HEK293 (cell line): ENCODE measurements at regions of chr1 and their contacts with region 1.

Region 1: DNA sequence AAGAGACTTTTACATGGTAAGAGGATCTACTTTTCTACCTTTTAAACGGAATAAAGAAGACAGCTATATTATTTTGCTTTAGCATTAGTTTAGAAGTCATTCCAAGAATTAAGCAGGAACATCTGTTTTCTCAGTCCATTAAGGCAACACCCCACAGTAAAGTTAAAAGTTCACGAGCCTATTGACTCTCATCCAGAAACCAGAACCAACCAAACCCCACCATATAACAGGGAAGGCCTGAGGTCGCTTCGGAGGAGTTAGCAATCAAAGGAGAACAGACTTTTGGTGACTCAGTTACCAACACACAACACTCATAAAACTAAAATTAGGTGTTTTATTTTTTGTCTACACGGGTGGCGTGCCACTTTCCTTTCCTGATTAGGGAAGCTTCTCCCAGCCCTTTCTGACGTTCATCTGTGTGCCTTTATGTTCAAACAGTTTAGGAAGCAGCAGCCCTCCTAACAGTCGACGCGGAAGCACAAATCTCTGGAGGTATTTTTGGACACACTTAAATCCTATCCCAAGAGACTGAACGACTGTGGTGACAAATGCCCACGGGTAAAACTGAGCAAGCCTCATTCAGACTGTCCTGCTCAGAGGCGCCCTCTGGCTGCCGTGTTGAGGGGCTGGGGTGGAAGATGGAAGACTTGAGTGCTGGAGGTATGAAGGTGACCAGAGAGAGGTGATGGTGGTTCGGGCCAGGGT is 8.6 kb upstream of the PLA2G2C start:
- H3K4me3 ChIP-seq: no peak overlapping the region
- H3K27ac ChIP-seq: no peak overlapping the region
- H3K4me1 ChIP-seq: no peaks in the 10 kb centered on the region
- CTCF ChIP-seq: 0 out of 2 replicates have a peak, but pooled peaks have one; percentile 40

Region 2: DNA sequence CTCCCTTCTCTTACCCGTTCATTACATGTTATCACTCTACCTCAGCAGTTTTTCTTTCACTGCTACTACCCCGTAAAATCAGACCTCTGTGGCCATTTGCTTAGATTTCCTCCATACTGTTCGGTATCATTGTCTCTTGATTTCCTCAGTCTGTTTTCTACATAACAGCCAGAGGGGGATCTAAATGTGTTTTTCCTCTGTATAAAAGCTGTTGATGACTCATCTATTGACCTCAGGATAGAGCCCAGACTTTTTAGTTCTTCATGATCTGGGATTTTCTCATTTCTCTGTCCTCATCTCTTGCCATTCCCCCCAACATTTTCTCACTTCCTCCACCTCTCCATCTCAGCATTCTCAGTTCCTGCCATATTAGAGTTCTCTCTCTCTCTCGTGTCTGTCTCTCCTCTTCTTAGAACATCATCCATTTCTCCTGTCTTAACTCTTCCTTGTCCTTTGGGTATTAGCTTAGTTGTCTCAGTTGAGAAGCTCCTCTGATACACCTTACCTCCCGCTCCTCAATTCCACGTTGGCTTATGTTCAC is 302.2 kb before region 1 on chr1:
- CTCF ChIA-PET with region 1: no interaction called
- POLR2A ChIA-PET with region 1: no interaction called
- H3K4me3 ChIP-seq: no peak overlapping the region
- H3K27ac ChIP-seq: no peak overlapping the region
- H3K4me1 ChIP-seq: 0 out of 2 replicates have a peak, but pooled peaks cover 5% of the 10 kb centered on the region
- CTCF ChIP-seq: no peak

Region 3: GRCh38 chr1:19918057-19918456 is 276.9 kb before region 1 on chr1:
- CTCF ChIA-PET with region 1: interaction called, 30 read pairs
- POLR2A ChIA-PET with region 1: no interaction called
- H3K4me3 ChIP-seq: no peak overlapping the region
- H3K27ac ChIP-seq: no peak overlapping the region
- H3K4me1 ChIP-seq: no peaks in the 10 kb centered on the region
- CTCF ChIP-seq: peak; percentile 84

Region 4: DNA sequence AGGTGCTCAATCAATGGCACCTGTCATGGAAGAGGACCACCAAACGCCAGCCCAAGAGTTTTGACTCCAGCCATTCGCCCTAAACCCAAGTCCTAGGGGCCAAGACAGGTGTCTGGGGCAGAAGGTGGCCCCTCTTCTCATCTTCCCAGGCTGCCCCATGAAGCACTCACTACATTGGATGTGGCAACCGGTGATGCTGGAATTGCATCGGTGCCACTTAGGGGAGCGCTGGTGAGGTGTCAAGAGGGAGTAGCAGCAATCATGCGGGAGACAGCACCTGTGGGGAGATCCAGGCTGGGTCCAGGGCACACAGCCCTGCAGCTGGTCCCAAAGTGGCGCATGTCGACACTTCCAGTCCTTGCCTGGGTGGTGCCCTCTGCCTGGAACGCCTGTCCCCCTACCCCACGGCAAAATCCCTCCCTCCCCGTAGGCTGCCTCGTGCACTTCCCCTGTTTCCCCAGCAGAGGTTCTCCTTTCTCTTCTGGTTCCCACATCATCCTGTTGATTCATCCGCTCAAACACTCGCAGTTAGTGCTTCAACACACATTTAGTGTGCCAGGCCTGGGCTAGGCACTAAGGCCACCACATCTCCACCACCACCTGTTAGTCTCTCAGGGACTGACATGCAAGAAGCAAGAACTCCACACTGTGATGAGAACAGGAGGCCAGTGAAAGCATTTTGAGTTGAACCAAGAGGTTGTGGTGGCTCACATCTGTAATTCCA is 94.1 kb before region 1 on chr1:
- CTCF ChIA-PET with region 1: interaction called, 11 read pairs
- POLR2A ChIA-PET with region 1: no interaction called
- H3K4me3 ChIP-seq: no peak overlapping the region
- H3K27ac ChIP-seq: no peak overlapping the region
- H3K4me1 ChIP-seq: no peaks in the 10 kb centered on the region
- CTCF ChIP-seq: peak; percentile 70

Region 5: DNA sequence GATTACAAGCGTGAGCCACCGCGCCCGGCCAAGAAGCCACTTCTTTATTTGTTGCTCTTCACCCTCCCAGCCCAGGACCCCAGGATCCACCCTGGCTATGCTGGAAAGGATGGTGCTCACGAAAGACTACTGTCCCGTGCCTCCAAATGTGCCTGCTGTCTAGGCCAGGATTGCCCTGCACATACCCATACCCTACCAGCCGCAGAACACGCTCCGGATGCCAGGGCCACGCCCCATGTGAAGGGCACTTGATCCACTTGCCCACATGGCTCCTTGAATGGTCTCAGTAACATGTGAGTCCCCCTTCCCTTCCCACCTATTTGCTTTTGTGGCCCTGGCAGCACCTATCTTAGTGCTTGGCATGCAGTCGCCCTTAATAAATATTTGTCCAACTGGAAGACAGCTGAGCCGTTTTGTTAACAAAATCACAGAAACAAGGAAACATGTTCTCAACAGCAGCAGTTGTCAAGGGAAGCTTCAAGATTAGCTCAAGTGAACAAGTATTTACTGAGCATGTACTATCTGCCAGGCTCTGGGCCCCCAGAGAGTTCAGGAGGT is 22.8 kb before region 1 on chr1:
- CTCF ChIA-PET with region 1: interaction called, 13 read pairs
- POLR2A ChIA-PET with region 1: no interaction called
- H3K4me3 ChIP-seq: no peak overlapping the region
- H3K27ac ChIP-seq: no peak overlapping the region
- H3K4me1 ChIP-seq: no peaks in the 10 kb centered on the region
- CTCF ChIP-seq: no peak

Region 6: DNA sequence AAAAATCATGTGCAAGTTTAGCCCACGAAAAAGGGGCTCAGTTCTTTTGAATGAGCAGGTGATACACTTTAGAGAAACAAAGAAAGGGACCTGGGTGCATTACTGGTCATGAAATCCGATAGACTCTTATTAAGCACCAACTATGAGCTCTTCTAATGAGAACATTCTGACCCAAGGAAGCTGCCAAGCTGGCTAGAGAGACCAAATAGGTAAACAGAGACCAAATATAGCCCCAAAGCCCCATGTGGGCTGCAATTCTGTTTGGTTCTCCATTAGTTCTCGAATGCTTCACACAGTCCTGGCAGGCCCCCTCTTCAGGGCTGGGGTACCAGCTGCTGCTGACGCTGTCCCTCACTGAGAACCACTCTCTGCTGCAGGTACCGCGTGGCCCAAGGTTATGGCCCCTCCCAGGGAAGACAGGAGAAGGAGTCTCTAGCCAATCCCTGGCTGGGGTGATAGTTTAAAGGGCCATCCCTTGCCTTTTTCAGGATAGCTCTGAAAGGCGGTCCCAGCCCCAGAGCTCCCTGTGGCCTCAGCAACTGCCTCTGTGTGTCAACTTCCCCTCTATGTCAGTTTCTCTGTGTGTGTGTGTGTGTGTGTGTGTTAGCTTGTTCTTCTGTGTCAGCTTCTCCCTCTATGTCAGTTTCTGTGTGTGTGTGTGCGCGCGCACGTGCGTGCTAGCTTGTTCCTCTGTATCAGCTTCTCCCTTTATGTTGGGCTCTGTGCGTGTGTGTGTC is 16.1 kb before region 1 on chr1:
- CTCF ChIA-PET with region 1: interaction called, 37 read pairs
- POLR2A ChIA-PET with region 1: no interaction called
- H3K4me3 ChIP-seq: no peak overlapping the region
- H3K27ac ChIP-seq: no peak overlapping the region
- H3K4me1 ChIP-seq: no peaks in the 10 kb centered on the region
- CTCF ChIP-seq: no peak

Region 7: GRCh38 chr1:20207419-20207959 is 12.6 kb after region 1 on chr1:
- CTCF ChIA-PET with region 1: interaction called, 25 read pairs
- POLR2A ChIA-PET with region 1: no interaction called
- H3K4me3 ChIP-seq: no peak overlapping the region
- H3K27ac ChIP-seq: no peak overlapping the region
- H3K4me1 ChIP-seq: no peaks in the 10 kb centered on the region
- CTCF ChIP-seq: no peak

Region 8: DNA sequence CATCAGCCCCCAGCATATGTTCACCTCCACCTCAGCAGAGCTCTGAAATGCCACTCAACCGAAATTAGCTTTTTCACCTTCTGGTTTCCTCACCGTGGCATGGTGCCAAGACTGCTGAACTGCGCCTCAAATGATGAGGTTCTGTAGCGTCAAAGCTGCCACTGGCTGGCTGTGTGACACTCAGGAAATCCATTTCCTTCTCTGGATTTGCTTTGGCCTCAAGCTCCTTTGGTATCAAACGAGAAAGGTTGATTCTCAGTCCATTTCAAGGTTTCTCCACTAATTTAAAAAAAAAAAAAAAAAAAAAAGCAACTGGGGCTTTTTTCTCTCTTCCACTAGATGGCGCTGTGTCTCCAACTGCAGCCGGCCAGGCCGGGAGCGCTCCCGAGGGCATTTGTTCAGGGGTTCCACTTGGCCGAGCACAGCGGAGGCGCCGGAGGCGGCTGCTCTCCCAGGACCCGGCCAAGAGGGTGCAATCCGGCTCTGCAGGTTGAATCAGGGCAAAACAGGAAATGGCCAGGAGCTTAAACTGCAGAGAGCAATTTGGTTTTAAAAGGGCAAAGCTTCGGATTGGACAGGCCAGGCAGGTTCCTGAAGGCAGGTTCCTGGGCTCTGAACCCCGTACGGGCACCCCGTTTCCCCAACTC is 17.9 kb after region 1 on chr1:
- CTCF ChIA-PET with region 1: interaction called, 25 read pairs
- POLR2A ChIA-PET with region 1: no interaction called
- H3K4me3 ChIP-seq: no peak overlapping the region
- H3K27ac ChIP-seq: no peak overlapping the region
- H3K4me1 ChIP-seq: no peaks in the 10 kb centered on the region
- CTCF ChIP-seq: peak; percentile 68; the same call in 1 of the 2 replicates

Region 9: GRCh38 chr1:20242810-20243479 is 48.0 kb after region 1 on chr1:
- CTCF ChIA-PET with region 1: no interaction called
- POLR2A ChIA-PET with region 1: no interaction called
- H3K4me3 ChIP-seq: no peak overlapping the region
- H3K27ac ChIP-seq: no peak overlapping the region
- H3K4me1 ChIP-seq: no peaks in the 10 kb centered on the region
- CTCF ChIP-seq: no peak

Region 10: DNA sequence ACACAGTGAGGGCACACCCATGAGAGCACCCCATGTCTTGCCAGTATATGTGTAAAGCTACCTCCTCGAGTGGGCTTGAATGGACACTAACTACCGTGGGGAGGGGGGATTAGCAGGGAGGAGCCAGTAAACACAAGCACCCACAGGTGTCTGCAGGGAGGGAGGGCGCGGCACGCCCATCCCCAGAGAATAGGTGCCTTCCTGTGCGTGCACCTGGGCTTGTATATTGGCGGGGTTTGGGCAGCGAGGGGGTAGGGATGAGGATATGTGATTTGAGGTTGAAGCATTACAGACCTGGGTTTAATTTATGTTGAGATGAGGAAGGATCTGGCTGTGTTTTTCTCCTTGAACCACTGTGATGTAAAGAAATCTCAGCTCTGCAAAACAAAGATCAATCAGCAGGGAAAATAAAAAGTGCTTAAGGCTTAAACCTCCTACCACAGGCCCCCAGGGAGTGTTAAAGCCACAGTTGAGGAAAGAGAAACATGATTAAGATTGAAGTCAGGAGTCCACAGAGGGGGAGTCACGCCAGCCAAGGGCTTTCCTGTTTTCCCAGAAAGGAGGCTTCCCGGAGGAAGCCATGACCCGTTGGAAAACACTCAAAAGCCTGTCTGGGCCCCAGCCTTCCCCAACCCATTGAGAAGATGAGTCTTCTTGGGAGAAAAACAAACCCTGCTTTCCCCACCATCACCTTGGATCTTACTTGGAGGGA is 211.1 kb after region 1 on chr1:
- CTCF ChIA-PET with region 1: no interaction called
- POLR2A ChIA-PET with region 1: no interaction called
- H3K4me3 ChIP-seq: no peak overlapping the region
- H3K27ac ChIP-seq: no peak overlapping the region
- H3K4me1 ChIP-seq: no peaks in the 10 kb centered on the region
- CTCF ChIP-seq: no peak